Panc1 (cell line): ENCODE measurements at regions of chr6 and their contacts with region 1.

Region 1: GRCh38 chr6:113511100-113511499 is 346.0 kb upstream of the MARCKS start:
- DNase-seq: no peak
- ATAC-seq: no peak
- H3K4me3 ChIP-seq: no peak overlapping the region
- H3K27ac ChIP-seq: no peak overlapping the region
- H3K4me1 ChIP-seq: no peaks in the 10 kb centered on the region
- H3K27me3 ChIP-seq: no peaks in the 10 kb centered on the region
- CTCF ChIP-seq: no peak

Region 2: DNA sequence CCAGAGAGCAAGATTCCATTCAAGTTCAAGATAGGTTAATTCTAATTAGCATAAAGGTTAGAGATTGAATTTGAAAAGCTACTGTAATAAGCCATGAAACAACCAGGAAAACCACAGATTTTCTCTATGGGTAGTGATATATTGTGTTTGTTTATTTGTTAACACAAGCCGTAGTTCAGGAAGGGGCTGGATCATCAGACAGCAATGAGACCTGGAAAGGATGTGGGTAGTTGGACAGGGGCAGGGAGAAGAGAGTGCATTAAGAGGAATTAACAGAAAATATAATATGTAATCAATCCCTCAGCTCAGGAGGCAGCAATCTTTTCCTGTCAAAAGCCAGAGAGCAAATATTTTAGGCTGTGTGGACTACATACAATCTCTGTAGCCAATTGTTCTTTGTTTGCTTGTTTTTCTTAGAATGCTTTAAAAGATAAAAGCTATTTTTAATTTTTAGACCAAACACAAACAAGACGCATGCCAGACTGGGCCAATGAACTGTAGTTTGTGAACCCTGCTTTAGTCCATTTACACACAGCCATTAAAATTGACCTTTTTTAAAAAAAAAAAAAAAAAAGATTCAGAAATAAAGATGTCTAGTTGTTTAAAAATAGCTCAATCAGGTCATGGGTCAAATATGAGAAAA is 52.6 kb before region 1 on chr6:
- CTCF ChIA-PET with region 1: no interaction called
- POLR2A ChIA-PET with region 1: interaction called, 10 read pairs
- in situ Hi-C with region 1: no loop called
- intact Hi-C with region 1: no loop called
- DNase-seq: no peak
- ATAC-seq: no peak
- H3K4me3 ChIP-seq: no peak overlapping the region
- H3K27ac ChIP-seq: no peak overlapping the region
- H3K4me1 ChIP-seq: no peaks in the 10 kb centered on the region
- H3K27me3 ChIP-seq: no peaks in the 10 kb centered on the region
- CTCF ChIP-seq: no peak

Region 3: DNA sequence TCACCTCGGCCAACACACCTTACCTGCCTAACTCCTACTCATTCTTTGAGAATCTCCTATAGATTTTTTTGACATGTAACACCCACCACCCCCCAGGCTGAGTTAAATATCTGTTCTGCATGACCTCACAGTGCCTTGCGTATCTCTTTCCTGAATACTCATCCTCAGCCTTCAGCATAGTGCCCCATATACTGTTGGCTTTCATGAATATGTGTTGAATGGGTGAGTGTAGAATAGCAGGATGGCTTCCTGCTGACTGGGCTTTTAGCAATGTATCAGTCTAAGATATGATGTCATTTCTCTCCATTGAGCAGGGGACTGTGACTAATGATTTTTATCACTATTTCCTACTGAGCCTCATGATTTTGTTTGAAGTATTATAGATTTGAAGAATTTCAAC is 15.6 kb before region 1 on chr6:
- CTCF ChIA-PET with region 1: no interaction called
- POLR2A ChIA-PET with region 1: no interaction called
- in situ Hi-C with region 1: no loop called
- intact Hi-C with region 1: no loop called
- DNase-seq: no peak
- ATAC-seq: no peak
- H3K4me3 ChIP-seq: no peak overlapping the region
- H3K27ac ChIP-seq: no peak overlapping the region
- H3K4me1 ChIP-seq: no peaks in the 10 kb centered on the region
- H3K27me3 ChIP-seq: no peaks in the 10 kb centered on the region
- CTCF ChIP-seq: no peak

Region 4: DNA sequence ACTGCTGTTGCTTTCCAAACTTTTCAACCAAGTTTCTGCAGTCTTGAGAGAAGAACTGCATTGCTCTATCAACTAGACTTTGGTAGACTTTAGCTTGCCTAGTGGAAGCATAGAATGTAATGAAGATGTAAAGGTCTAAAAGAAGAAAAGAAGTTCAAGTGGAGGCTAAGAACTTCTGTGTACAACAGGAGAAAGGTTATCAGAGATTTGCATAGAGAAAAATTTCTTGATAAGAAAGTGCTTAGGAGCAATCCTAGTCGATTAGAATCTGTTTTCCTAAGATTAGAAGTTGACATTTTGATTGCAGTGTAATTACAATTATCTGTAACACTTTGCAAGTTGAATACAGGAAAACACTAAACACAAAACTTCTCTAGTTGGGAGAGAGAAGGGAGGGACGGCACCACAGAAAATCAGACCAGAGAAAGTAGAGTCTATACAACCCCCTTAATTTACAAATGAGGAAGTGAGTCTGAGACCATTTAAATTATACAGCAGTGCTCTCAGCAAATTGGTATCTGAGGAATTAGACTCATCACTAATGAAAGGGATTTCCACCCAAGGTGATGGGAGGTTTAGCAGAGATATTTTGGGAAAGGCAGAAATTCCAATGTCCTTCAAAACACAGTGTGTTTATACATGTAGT is 151.7 kb after region 1 on chr6:
- CTCF ChIA-PET with region 1: no interaction called
- POLR2A ChIA-PET with region 1: no interaction called
- in situ Hi-C with region 1: no loop called
- intact Hi-C with region 1: no loop called
- DNase-seq: no peak
- ATAC-seq: no peak
- H3K4me3 ChIP-seq: no peak overlapping the region
- H3K27ac ChIP-seq: no peak overlapping the region
- H3K4me1 ChIP-seq: no peaks in the 10 kb centered on the region
- H3K27me3 ChIP-seq: no peaks in the 10 kb centered on the region
- CTCF ChIP-seq: no peak

Region 5: GRCh38 chr6:113755449-113756289 is 244.6 kb after region 1 on chr6:
- CTCF ChIA-PET with region 1: no interaction called
- POLR2A ChIA-PET with region 1: no interaction called
- in situ Hi-C with region 1: no loop called
- intact Hi-C with region 1: no loop called
- DNase-seq: no peak
- ATAC-seq: no peak
- H3K4me3 ChIP-seq: no peak overlapping the region
- H3K27ac ChIP-seq: no peak overlapping the region
- H3K4me1 ChIP-seq: no peaks in the 10 kb centered on the region
- H3K27me3 ChIP-seq: no peaks in the 10 kb centered on the region
- CTCF ChIP-seq: no peak

Region 6: DNA sequence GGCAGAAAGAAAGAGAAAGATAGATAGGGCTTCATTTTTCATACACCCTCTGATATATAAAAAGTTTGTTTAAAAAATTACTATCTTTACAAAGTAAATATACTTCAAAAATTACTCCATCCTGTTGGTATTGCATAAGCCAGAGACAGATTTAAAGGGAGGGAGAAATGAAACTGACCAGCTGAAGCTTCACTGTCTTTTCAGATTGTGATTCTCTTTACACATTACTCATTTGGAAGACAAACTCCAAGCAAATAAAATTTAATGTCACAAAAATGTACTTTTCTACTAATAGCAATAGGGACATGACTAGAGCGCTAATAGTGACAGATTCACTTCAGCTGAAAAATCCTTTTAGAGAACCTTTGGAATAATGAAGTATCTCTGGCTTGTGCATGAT is 307.5 kb after region 1 on chr6:
- CTCF ChIA-PET with region 1: no interaction called
- POLR2A ChIA-PET with region 1: no interaction called
- in situ Hi-C with region 1: no loop called
- intact Hi-C with region 1: no loop called
- DNase-seq: no peak
- ATAC-seq: no peak
- H3K4me3 ChIP-seq: no peak overlapping the region
- H3K27ac ChIP-seq: no peak overlapping the region
- H3K4me1 ChIP-seq: no peaks in the 10 kb centered on the region
- H3K27me3 ChIP-seq: peaks cover 2% of the 10 kb centered on the region; the same call in 1 of the 2 replicates
- CTCF ChIP-seq: no peak